ENCODE measurements at regions of chr9 and their contacts with region 1.

Region 1: GRCh38 chr9:73183917-73184861 is 32.5 kb downstream of the ANXA1 start:
- DNase-seq: peak in 6 of 9 donors; percentile 41 to 70 (median 57)
- ATAC-seq: peak; percentile 50
- H3K4me3 ChIP-seq: no peak overlapping the region
- H3K4me3 Mint-ChIP-seq: no peak overlapping the region
- H3K27ac ChIP-seq: no peak overlapping the region
- H3K27ac Mint-ChIP-seq: no peak overlapping the region
- H3K4me1 ChIP-seq: no peaks in the 10 kb centered on the region
- H3K4me1 Mint-ChIP-seq: peaks cover 0 to 7% (median 0%) of the 10 kb centered on the region in 7 donors
- H3K27me3 ChIP-seq: no peaks in the 10 kb centered on the region
- H3K27me3 Mint-ChIP-seq: peaks cover 17 to 37% (median 25%) of the 10 kb centered on the region in 5 donors

Region 2: DNA sequence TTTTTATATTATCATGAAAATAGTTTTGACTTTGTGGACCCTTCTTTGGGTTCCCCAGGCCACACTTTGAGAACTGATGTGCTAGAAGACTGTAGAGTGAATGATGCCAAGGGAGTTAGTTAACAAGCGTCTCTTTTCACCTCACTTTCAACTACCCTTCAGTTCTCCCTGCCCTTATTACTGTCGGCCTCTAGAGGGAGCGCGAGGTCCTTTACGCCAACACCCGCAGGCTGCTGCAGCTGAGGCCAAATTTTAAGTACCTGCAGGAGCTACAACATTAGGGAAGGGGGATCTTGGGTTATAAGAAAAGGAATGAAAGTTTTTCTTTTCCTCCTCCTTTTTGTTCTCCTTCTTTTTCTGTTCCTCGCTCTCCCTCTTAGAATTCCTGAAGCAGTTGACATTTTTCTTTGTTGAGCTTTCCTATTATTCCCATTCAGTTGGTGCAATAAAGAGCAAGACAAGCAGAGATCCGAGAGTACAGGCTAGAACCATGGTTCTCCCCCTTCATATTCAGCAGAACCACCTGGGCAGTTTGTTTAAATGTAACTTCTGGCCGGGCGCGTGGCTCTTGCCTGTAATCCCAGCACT is 903.2 kb before region 1 on chr9:
- CTCF ChIA-PET with region 1: no interaction called
- POLR2A ChIA-PET with region 1: no interaction called
- intact Hi-C with region 1: loop called (anchors 2 to 10 kb)
- DNase-seq: peak; percentile 37 to 66 (median 58)
- ATAC-seq: peak; percentile 90
- H3K4me3 ChIP-seq: no peak overlapping the region
- H3K4me3 Mint-ChIP-seq: no peak overlapping the region
- H3K27ac ChIP-seq: no peak overlapping the region
- H3K27ac Mint-ChIP-seq: no peak overlapping the region
- H3K4me1 ChIP-seq: no peaks in the 10 kb centered on the region
- H3K4me1 Mint-ChIP-seq: peaks cover 0 to 3% (median 0%) of the 10 kb centered on the region in 7 donors
- H3K27me3 ChIP-seq: no peaks in the 10 kb centered on the region
- H3K27me3 Mint-ChIP-seq: peaks cover 0 to 12% (median 0%) of the 10 kb centered on the region in 5 donors

Region 3: DNA sequence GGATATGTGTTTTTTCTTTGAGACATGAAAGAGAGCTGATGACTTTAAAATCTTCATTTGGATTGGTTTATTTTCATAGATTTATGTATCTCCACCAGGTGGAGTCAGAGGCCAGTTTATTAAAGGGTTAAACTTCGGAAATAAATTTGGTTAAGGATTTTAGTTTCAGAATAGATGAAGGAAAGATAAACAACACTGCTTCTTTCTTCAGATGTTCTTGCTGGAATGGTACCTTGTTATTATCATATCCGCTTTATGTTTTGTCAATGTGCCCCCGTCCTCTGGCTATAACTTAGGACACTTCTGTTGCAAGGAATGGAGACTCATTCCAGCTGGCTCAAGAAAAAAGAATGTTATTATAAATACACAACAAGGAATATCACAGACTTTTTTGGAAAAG is 312.5 kb before region 1 on chr9:
- CTCF ChIA-PET with region 1: no interaction called
- POLR2A ChIA-PET with region 1: no interaction called
- intact Hi-C with region 1: loop called in 1 of 2 experiments (anchors 5 kb)
- DNase-seq: no peak
- ATAC-seq: no peak
- H3K4me3 ChIP-seq: no peak overlapping the region
- H3K4me3 Mint-ChIP-seq: no peak overlapping the region
- H3K27ac ChIP-seq: no peak overlapping the region
- H3K27ac Mint-ChIP-seq: no peak overlapping the region
- H3K4me1 ChIP-seq: no peaks in the 10 kb centered on the region
- H3K4me1 Mint-ChIP-seq: no peaks in the 10 kb centered on the region
- H3K27me3 ChIP-seq: no peaks in the 10 kb centered on the region
- H3K27me3 Mint-ChIP-seq: peaks cover 3 to 30% (median 16%) of the 10 kb centered on the region in 5 donors

Region 4: DNA sequence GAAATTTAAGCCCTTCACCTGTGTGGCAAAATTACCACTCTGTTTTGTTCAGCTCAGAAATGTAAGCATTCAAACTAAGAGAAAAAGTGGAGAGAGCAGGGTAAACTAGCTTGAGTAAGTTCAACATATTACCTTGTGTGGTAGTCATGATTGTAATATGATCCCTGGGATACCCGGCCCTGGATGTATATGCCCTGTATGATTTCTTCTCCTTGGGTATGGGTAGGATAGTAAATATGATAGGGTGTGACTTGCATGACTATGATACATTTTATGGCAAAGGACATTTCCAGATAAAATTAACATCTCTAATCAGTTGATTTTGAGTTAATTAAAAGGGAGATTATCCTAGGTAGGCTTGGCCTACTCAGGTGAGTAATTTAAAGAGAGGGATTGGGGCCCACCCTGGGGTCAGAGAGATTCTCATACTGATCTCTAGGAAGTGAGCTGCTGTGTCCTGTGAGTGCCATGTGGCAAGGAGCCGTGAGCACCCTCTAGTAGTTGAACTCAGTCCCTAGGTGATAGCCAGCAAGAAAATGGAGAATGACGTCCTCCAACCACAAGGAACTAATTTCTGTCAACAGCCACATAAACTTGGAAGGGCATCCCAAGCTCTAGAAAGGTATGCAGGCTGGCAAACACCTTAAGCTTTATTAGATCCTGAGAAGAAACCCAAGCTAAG is 94.7 kb before region 1 on chr9:
- CTCF ChIA-PET with region 1: no interaction called
- POLR2A ChIA-PET with region 1: no interaction called
- intact Hi-C with region 1: no loop called
- DNase-seq: no peak
- ATAC-seq: no peak
- H3K4me3 ChIP-seq: no peak overlapping the region
- H3K4me3 Mint-ChIP-seq: no peak overlapping the region
- H3K27ac ChIP-seq: no peak overlapping the region
- H3K27ac Mint-ChIP-seq: no peak overlapping the region
- H3K4me1 ChIP-seq: no peaks in the 10 kb centered on the region
- H3K4me1 Mint-ChIP-seq: peaks cover 0 to 6% (median 5%) of the 10 kb centered on the region in 7 donors
- H3K27me3 ChIP-seq: no peaks in the 10 kb centered on the region
- H3K27me3 Mint-ChIP-seq: peaks cover 0 to 22% (median 12%) of the 10 kb centered on the region in 5 donors

Region 5: GRCh38 chr9:73104342-73104741 is 79.8 kb before region 1 on chr9:
- CTCF ChIA-PET with region 1: interaction called, 148 read pairs
- POLR2A ChIA-PET with region 1: no interaction called
- intact Hi-C with region 1: loop called (anchors 1 kb)
- DNase-seq: no peak
- ATAC-seq: peak; percentile 37
- H3K4me3 ChIP-seq: no peak overlapping the region
- H3K4me3 Mint-ChIP-seq: no peak overlapping the region
- H3K27ac ChIP-seq: no peak overlapping the region
- H3K27ac Mint-ChIP-seq: no peak overlapping the region
- H3K4me1 ChIP-seq: no peaks in the 10 kb centered on the region
- H3K4me1 Mint-ChIP-seq: peaks cover 0 to 3% (median 0%) of the 10 kb centered on the region in 7 donors
- H3K27me3 ChIP-seq: no peaks in the 10 kb centered on the region
- H3K27me3 Mint-ChIP-seq: peaks cover 0 to 23% (median 0%) of the 10 kb centered on the region in 5 donors

Region 6: GRCh38 chr9:73149371-73150067 is 34.7 kb before region 1 on chr9:
- CTCF ChIA-PET with region 1: interaction called, 5 read pairs
- POLR2A ChIA-PET with region 1: no interaction called
- intact Hi-C with region 1: loop called (anchors 2 kb)
- DNase-seq: peak in 1 of 9 donors; percentile 57
- ATAC-seq: peak; percentile 49
- H3K4me3 ChIP-seq: peak overlapping the region; percentile 17
- H3K4me3 Mint-ChIP-seq: peak overlapping the region in 9 of 10 donors; percentile 8 to 79 (median 60)
- H3K27ac ChIP-seq: peak overlapping the region; percentile 32
- H3K27ac Mint-ChIP-seq: peak overlapping the region; percentile 71 to 96 (median 78)
- H3K4me1 ChIP-seq: peaks cover 28 to 32% of the 10 kb centered on the region in 2 donors
- H3K4me1 Mint-ChIP-seq: peaks cover 34 to 80% (median 54%) of the 10 kb centered on the region in 7 donors
- H3K27me3 ChIP-seq: no peaks in the 10 kb centered on the region
- H3K27me3 Mint-ChIP-seq: peaks cover 0 to 2% (median 0%) of the 10 kb centered on the region in 5 donors

Region 7: GRCh38 chr9:73200694-73201452 is 16.7 kb after region 1 on chr9:
- CTCF ChIA-PET with region 1: no interaction called
- POLR2A ChIA-PET with region 1: no interaction called
- intact Hi-C with region 1: no loop called
- DNase-seq: peak in 3 of 9 donors; percentile 14 to 34 (median 17)
- ATAC-seq: no peak
- H3K4me3 ChIP-seq: no peak overlapping the region
- H3K4me3 Mint-ChIP-seq: no peak overlapping the region
- H3K27ac ChIP-seq: no peak overlapping the region
- H3K27ac Mint-ChIP-seq: no peak overlapping the region
- H3K4me1 ChIP-seq: no peaks in the 10 kb centered on the region
- H3K4me1 Mint-ChIP-seq: peaks cover 0 to 2% (median 0%) of the 10 kb centered on the region in 7 donors
- H3K27me3 ChIP-seq: peaks cover 0 to 6% of the 10 kb centered on the region in 2 donors
- H3K27me3 Mint-ChIP-seq: peaks cover 4 to 20% (median 12%) of the 10 kb centered on the region in 5 donors

Region 8: DNA sequence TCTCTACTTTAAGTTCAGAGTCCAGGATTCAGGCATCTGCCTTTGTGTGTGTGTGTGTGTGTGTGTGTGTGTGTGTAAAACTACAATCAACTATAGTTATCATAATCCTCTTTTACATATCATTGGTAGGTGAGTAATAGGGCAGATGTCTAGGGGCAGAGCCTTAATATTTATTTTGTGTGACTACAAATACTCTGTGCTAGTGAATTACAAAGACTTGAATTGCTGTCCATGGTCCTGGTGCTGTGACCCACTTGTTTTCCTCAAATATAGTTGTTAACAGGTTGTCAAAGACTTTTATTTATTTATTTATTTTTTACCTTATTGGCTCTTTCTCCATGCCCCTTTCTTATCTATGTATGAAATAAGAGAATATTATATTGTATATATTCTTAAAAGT is 164.3 kb after region 1 on chr9:
- CTCF ChIA-PET with region 1: no interaction called
- POLR2A ChIA-PET with region 1: no interaction called
- intact Hi-C with region 1: no loop called
- DNase-seq: no peak
- ATAC-seq: no peak
- H3K4me3 ChIP-seq: no peak overlapping the region
- H3K4me3 Mint-ChIP-seq: no peak overlapping the region
- H3K27ac ChIP-seq: no peak overlapping the region
- H3K27ac Mint-ChIP-seq: no peak overlapping the region
- H3K4me1 ChIP-seq: no peaks in the 10 kb centered on the region
- H3K4me1 Mint-ChIP-seq: no peaks in the 10 kb centered on the region
- H3K27me3 ChIP-seq: no peaks in the 10 kb centered on the region
- H3K27me3 Mint-ChIP-seq: no peaks in the 10 kb centered on the region

Region 9: DNA sequence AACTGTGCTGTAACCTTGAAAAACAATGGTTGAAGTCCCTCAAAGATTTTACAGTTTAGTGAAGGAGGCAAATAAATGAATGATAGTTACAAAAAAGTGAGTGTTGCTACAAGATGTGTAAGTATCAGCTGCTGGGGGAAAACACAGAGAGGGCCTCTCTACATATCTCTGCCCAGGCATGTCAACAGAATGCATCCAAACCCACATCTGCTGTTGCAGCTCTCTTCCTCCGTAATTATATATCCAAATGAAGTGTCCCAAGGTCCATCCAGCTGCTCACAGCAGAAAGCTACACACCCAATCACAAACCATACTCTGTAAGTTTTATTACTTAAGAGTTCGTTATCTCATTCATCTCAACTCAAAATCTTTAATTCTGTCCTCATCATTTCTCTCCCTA is 552.1 kb after region 1 on chr9:
- CTCF ChIA-PET with region 1: no interaction called
- POLR2A ChIA-PET with region 1: no interaction called
- intact Hi-C with region 1: no loop called
- DNase-seq: no peak
- ATAC-seq: no peak
- H3K4me3 ChIP-seq: no peak overlapping the region
- H3K4me3 Mint-ChIP-seq: no peak overlapping the region
- H3K27ac ChIP-seq: no peak overlapping the region
- H3K27ac Mint-ChIP-seq: no peak overlapping the region
- H3K4me1 ChIP-seq: no peaks in the 10 kb centered on the region
- H3K4me1 Mint-ChIP-seq: no peaks in the 10 kb centered on the region
- H3K27me3 ChIP-seq: no peaks in the 10 kb centered on the region
- H3K27me3 Mint-ChIP-seq: no peaks in the 10 kb centered on the region